Activated CD8-positive, alpha-beta T cell treated with anti-CD3 and anti-CD28 coated beads, Interleukin-2, amount 10 ng/mL, durations not matched to agents 7 days and 5 days (primary cell): ENCODE measurements at regions of chr3 and their contacts with region 1.

Region 1: DNA sequence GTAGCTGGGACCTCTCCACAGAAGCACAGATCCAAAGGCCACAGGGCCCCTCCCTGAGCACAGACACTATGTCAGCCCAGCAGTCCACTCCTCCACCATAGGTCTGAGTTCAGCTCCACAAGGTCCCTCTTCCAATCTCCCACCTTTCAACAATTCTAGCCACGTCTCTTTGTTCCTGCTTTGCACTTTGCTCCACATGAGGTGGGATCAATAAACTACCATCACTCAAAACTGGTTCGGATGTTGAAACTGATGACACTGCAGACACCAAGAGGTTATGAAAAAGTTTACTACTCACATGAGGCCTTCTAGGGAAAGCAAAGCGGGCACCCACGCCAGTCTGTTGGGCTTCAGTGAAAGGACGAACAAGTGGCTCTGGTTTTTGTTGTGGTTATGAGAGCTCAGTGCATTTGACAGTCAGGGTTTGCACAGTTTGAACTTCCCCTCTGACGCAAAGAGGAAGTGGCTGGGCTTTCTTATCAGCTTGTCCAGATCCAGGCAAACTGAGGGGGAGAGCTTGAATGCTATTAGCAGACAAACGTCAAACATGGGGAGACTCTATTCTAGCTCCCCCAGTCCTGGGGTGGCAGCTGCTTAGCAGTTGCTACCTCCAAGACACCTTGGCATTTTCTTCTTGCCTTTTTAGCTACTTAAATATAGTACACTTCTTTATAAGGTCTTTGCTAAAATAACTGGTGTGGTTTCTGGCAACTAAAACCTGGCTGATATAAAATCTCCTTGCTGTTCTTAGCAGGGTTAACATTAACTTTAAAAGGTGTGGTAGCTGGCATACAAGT is 37.8 kb downstream of the ZNF445 start:
- DNase-seq: peak; percentile 88
- ATAC-seq: peak; percentile 91
- H3K4me3 Mint-ChIP-seq: peak overlapping the region; percentile 65
- H3K27ac Mint-ChIP-seq: peak overlapping the region; percentile 96
- H3K4me1 Mint-ChIP-seq: peaks cover 44% of the 10 kb centered on the region
- H3K27me3 Mint-ChIP-seq: no peaks in the 10 kb centered on the region

Region 2: DNA sequence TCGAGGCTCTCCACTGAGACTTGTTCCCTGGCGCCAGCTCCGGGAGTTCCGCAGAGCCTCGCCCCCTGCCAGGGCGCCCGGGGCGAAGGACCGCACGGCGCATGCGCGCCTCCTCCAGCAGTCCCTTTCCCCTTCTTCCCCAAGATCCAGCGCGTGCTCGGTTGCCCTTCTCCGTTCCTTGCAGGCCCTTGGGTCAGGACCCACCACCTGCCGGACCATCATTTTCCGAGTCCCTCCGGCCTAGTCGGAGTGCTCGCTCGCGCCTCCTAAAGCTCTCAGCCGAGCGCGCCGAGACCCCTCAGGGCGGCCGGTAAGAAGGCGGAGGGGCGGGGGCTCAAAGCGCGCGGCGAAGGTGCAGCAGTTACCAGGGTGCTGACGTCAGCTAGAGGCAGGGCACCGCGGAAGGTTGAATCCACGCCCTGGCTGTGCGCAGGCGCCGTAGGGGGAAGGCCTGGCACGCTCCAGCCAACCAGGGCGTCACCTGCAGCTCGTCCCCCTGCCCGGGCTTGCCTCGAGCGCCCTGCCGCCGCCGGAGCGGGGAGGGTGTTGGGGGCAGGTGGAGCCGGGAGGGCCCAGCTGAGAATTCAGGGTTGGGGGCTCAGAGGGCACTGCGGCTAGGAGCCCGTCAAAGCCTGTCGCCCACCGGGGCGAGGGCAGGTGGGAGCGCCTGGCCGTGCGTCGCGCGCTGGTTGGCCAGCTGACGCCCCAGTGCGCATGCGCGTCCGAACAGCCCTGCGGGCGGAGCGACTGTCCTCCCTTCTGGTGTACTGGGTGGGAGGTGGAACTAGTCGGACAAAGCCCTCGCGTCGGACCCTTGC is 101.5 kb before region 1 on chr3 and contains the start of gene TCAIM:
- CTCF ChIA-PET with region 1: interaction called, 3 read pairs
- POLR2A ChIA-PET with region 1: interaction called, 11 read pairs
- DNase-seq: peak; percentile 99
- ATAC-seq: peak; percentile 98
- H3K4me3 Mint-ChIP-seq: peak within 1 kb of the TSS; percentile 99
- H3K27ac Mint-ChIP-seq: peak within 1 kb of the TSS; percentile 100
- H3K4me1 Mint-ChIP-seq: peaks cover 24% of the 10 kb centered on the region
- H3K27me3 Mint-ChIP-seq: peaks cover 14% of the 10 kb centered on the region
- total RNA-seq, gene TCAIM: 17.9 to 21.8 TPM

Region 3: GRCh38 chr3:44424763-44425162 is 14.9 kb before region 1 on chr3:
- CTCF ChIA-PET with region 1: no interaction called
- POLR2A ChIA-PET with region 1: no interaction called
- DNase-seq: no peak
- ATAC-seq: no peak
- H3K4me3 Mint-ChIP-seq: no peak overlapping the region
- H3K27ac Mint-ChIP-seq: no peak overlapping the region
- H3K4me1 Mint-ChIP-seq: no peaks in the 10 kb centered on the region
- H3K27me3 Mint-ChIP-seq: peaks cover 4% of the 10 kb centered on the region

Region 4: GRCh38 chr3:44510000-44510368 is 70.3 kb after region 1 on chr3:
- CTCF ChIA-PET with region 1: no interaction called
- POLR2A ChIA-PET with region 1: interaction called, 11 read pairs
- DNase-seq: peak; percentile 29
- ATAC-seq: peak; percentile 35
- H3K4me3 Mint-ChIP-seq: peak overlapping the region; percentile 95
- H3K27ac Mint-ChIP-seq: peak overlapping the region; percentile 94
- H3K4me1 Mint-ChIP-seq: peaks cover 25% of the 10 kb centered on the region
- H3K27me3 Mint-ChIP-seq: no peaks in the 10 kb centered on the region

Region 5: DNA sequence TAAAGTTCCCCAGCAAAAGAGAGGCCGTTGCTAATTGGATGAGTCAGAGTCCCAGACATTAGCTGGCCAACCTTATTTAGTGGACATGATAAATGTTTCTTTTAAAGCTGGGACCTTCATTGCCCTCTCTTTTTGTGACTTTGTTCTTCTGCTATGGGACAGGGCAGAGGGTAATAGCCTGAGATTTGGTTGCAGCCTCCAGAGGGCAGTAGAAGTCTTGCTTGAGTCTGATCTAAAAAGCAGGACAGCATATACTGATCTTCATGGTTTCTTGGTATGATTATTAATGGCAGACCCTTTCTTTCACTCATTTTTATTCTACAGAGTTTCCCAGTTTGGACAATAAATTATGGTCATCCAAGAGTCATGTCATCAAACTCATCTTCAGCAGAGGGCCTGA is 90.2 kb after region 1 on chr3:
- CTCF ChIA-PET with region 1: no interaction called
- POLR2A ChIA-PET with region 1: no interaction called
- DNase-seq: peak; percentile 46
- ATAC-seq: no peak
- H3K4me3 Mint-ChIP-seq: no peak overlapping the region
- H3K27ac Mint-ChIP-seq: no peak overlapping the region
- H3K4me1 Mint-ChIP-seq: no peaks in the 10 kb centered on the region
- H3K27me3 Mint-ChIP-seq: peaks cover 20% of the 10 kb centered on the region

Region 6: DNA sequence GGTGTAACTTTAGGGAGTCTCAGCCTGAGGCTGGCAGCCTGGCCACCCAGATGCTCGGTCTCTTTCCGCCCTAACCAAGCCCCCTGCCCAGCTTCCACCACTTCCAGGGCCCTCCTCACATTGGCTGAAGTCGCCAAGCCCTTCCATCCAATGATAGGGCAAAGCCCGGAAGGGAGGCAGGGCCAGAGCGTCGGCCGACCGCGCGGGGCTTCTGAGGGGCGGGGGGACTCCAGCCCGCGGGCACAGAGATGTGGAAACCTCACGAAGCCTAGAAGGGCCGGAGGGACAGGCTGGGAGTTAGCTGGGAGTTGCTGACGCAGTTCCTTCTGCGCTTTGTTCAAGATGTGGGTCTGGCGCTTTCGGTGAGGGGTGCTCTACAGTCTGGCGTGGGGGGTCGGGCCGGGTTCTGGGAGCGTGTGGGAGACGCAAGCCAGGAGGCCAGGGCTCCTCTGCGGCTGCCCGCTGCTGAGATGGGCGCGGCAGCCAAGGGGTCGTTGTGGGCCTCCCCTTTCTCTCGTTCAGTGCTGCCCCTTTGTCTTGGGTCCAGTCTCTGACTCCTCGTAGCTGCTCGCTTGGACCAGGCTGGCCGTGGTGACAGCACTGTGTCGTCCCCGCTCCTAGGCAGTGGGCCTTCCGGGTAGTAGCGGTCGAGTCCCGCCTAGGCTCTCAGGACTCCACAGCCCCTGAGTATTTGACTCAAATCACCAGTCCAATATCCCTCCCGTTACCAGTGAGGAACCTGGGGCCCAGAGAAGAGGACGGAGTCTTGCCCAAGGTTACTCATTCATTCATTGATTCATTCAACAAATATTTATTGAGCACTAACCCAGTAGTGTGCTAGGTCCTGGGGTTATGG is 145.2 kb after region 1 on chr3 and contains the start of gene ZNF660:
- CTCF ChIA-PET with region 1: no interaction called
- POLR2A ChIA-PET with region 1: no interaction called
- DNase-seq: no peak
- ATAC-seq: peak; percentile 51
- H3K4me3 Mint-ChIP-seq: peak within 1 kb of the TSS; percentile 40
- H3K27ac Mint-ChIP-seq: peak within 1 kb of the TSS; percentile 13
- H3K4me1 Mint-ChIP-seq: peaks cover 3% of the 10 kb centered on the region
- H3K27me3 Mint-ChIP-seq: peaks cover 7% of the 10 kb centered on the region
- total RNA-seq, gene ZNF660: 0.55 to 0.83 TPM